AG04450 (cell line): ENCODE measurements at regions of chr4 and their contacts with region 1.

Region 1: DNA sequence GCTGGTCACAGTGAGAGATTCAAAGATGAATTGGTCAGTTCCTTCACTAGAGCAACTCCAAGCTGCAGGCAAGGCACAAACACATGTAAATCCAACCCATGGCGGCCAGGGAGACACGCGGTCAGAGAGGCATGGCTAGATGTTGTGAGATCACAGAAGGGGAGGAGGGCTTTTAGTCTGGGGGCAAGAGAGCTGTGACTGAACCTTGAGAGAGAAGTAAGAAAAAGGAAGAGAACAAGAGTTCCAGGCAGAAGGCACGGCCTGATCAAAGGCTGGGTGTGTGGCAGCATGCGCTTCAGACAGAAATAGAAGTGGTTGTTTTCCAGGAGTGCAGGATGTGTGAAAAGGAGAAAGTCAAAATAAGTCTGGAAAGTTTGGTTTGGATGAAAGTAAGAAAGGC is 15.9 kb downstream of the CCDC149 start:
- DNase-seq: no peak
- H3K4me3 ChIP-seq: no peak overlapping the region
- H3K27ac ChIP-seq: no peak overlapping the region
- H3K27me3 ChIP-seq: no peaks in the 10 kb centered on the region
- CTCF ChIP-seq: no peak

Region 2: DNA sequence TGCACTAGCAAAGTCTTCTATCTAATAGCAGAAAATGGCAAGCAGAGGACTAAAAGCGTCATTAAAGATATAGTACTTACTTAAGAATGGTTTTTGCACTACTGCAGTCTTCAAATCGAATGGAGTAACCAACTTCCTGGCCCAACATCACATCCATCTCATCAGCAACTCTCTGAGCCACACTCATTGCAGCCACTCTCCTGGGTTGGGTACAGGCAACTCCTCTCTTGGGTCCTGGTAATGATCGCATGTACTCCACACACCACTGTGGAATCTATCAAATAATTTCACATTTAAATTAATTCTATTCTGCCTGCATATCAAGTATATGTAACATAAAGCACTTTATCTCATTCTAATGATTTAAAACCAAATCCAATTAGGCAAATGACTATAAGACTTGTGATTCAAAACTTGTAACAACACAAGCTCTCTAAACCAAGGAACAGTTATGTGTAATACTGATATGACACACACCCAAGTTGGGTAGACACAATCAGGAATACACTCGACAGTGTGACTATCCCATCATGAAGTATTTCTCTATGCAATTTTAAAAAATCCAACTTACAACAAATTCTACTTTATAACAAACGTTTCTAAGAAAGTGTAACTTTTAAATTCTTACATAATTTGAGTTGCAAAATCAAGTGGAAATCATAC is 326.3 kb before region 1 on chr4:
- CTCF ChIA-PET with region 1: no interaction called
- POLR2A ChIA-PET with region 1: interaction called, 13 read pairs
- DNase-seq: no peak
- H3K4me3 ChIP-seq: no peak overlapping the region
- H3K27ac ChIP-seq: no peak overlapping the region
- H3K27me3 ChIP-seq: no peaks in the 10 kb centered on the region
- CTCF ChIP-seq: no peak